ENCODE measurements at regions of chr2 and their contacts with region 1.

Region 1: GRCh38 chr2:78992451-78992806 is 33.1 kb upstream of the REG3G start:
- DNase-seq: peak; percentile 37
- ATAC-seq: no peak
- H3K4me3 ChIP-seq: no peak overlapping the region
- H3K27ac ChIP-seq: no peak overlapping the region
- H3K4me1 ChIP-seq: no peaks in the 10 kb centered on the region
- H3K27me3 ChIP-seq: peaks cover 22% of the 10 kb centered on the region
- CTCF ChIP-seq: peak; percentile 54

Region 2: DNA sequence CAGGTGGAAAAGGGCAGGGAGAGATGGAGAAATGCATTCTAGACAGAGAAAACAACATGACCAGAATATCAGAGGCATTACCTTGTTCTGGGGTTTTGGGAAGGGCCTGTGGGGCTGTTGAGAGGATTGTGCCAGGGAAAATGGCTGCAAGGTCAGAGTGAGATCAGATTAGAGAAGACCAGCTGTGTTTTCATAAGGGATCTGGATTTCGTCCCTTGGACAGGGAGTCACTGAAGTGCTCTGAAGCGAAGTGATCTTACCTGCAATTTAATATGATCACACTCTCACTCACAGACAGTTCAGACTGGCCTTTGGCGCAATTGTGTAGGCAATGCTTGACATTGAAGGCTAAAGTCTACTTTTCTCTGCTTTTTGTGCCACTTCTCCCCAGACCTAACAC is 12.8 kb after region 1 on chr2:
- CTCF ChIA-PET with region 1: no interaction called
- POLR2A ChIA-PET with region 1: no interaction called
- intact Hi-C with region 1: no loop called
- DNase-seq: no peak
- ATAC-seq: no peak
- H3K4me3 ChIP-seq: no peak overlapping the region
- H3K27ac ChIP-seq: no peak overlapping the region
- H3K4me1 ChIP-seq: no peaks in the 10 kb centered on the region
- H3K27me3 ChIP-seq: no peaks in the 10 kb centered on the region
- CTCF ChIP-seq: no peak

Region 3: DNA sequence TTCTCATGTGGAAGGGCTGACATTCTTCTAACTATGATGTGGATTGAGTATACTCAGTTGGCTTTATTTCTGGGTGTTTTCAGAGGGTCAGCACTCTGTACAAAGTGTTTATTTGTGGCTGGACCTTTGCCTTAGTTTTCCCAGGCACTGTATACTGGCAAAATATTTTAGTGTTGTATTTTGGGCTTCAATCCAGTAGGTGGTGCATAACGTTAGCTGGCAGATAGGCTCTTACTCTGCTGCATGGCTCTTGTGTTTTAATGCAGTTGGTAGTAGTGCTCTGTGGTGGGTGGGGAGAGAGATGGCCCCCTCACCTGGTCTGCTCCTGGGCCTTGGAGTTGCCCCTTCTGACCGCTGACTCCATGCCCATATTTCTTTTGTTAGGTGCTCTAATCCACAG is 242.7 kb after region 1 on chr2:
- CTCF ChIA-PET with region 1: no interaction called
- POLR2A ChIA-PET with region 1: no interaction called
- intact Hi-C with region 1: no loop called
- DNase-seq: no peak
- ATAC-seq: no peak
- H3K4me3 ChIP-seq: no peak overlapping the region
- H3K27ac ChIP-seq: no peak overlapping the region
- H3K4me1 ChIP-seq: no peaks in the 10 kb centered on the region
- H3K27me3 ChIP-seq: no peaks in the 10 kb centered on the region
- CTCF ChIP-seq: 0 out of 2 replicates have a peak, but pooled peaks have one; percentile 12

Region 4: DNA sequence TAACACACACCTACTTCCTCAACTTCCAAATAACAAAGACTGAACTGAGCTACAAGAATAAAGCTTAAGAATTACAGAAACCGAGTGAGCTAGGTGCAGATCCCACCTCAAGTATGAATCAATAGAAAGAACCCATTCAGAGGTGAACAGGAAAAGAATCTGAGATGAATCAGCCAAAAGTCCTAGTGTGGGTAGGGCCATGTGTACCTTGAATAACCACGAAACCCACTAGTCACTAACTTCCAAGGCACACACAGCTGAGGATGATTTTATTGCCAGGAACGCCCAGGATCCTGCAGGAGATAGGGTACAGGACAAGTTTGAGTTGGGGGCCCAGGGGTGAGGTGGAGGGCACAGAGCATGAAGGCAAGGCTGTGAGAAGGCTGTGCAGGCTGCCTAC is 266.9 kb after region 1 on chr2:
- CTCF ChIA-PET with region 1: no interaction called
- POLR2A ChIA-PET with region 1: no interaction called
- intact Hi-C with region 1: no loop called
- DNase-seq: no peak
- ATAC-seq: no peak
- H3K4me3 ChIP-seq: no peak overlapping the region
- H3K27ac ChIP-seq: no peak overlapping the region
- H3K4me1 ChIP-seq: no peaks in the 10 kb centered on the region
- H3K27me3 ChIP-seq: no peaks in the 10 kb centered on the region
- CTCF ChIP-seq: no peak

Region 5: GRCh38 chr2:79887747-79888374 is 895.4 kb after region 1 on chr2:
- CTCF ChIA-PET with region 1: no interaction called
- POLR2A ChIA-PET with region 1: no interaction called
- intact Hi-C with region 1: loop called (anchors 5 kb)
- DNase-seq: peak; percentile 73
- ATAC-seq: peak; percentile 67
- H3K4me3 ChIP-seq: no peak overlapping the region
- H3K27ac ChIP-seq: no peak overlapping the region
- H3K4me1 ChIP-seq: no peaks in the 10 kb centered on the region
- H3K27me3 ChIP-seq: no peaks in the 10 kb centered on the region; the same call in 1 of the 2 replicates
- CTCF ChIP-seq: peak; percentile 83

Measured in PC-3 (cell line).